ENCODE measurements at regions of chr17 and their contacts with region 1.

Region 1: GRCh38 chr17:50397111-50397918 is at the start of gene LRRC59:
- DNase-seq: peak; percentile 82
- H3K4me3 Mint-ChIP-seq: peak within 1 kb of the TSS; percentile 96
- H3K27ac Mint-ChIP-seq: peak within 1 kb of the TSS; percentile 90
- H3K4me1 Mint-ChIP-seq: peaks cover 20% of the 10 kb centered on the region
- H3K27me3 Mint-ChIP-seq: no peaks in the 10 kb centered on the region
- CTCF ChIP-seq: peak; percentile 96
- total RNA-seq, gene LRRC59: 306 and 344 TPM in 2 replicates

Region 2: DNA sequence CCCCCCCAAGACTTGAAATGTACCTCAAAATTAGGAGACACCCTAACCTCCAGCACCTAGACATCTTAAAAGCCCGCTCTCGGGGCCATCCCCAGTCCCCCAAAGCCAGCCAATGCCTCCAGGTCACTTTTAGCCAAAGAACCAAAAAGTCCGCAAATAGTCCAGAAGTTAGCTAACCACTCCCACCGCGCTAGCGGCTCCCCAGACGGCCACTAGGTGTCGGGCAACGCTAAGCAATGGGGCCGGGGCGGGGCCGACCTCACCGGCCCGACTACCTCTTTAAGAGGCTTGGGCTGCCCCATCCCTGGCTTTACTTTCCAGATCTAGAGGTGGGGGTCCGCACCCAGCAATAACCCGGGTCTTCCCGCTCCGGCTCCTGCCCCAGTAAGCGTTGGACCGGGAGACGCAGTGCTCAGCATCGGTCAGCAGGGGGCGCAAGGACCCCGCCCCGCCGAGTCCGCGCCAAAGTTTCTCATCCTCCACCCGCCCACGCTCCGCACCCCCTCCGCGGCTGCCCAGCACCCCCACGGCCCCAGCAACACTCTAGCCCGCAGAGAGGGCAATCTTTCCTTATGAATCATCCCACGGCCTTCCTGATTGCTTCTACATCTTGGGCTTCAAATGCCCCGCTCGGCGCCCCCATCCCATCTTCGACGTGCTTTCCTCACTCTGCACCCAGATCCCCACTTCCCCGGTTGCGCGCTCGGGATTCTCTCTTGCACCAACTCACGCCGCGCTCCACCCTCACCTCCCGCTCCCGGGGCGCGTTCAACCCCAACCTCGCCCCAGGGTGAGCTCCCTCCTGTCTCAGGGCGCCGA is 196.6 kb before region 1 on chr17:
- CTCF ChIA-PET with region 1: interaction called, 3 read pairs
- POLR2A ChIA-PET with region 1: interaction called, 6 read pairs
- intact Hi-C with region 1: loop called (anchors 1 kb)
- DNase-seq: peak; percentile 90
- H3K4me3 Mint-ChIP-seq: peak overlapping the region; percentile 78
- H3K27ac Mint-ChIP-seq: peak overlapping the region; percentile 64
- H3K4me1 Mint-ChIP-seq: peaks cover 20% of the 10 kb centered on the region
- H3K27me3 Mint-ChIP-seq: peaks cover 9% of the 10 kb centered on the region
- CTCF ChIP-seq: peak; percentile 99

Region 3: DNA sequence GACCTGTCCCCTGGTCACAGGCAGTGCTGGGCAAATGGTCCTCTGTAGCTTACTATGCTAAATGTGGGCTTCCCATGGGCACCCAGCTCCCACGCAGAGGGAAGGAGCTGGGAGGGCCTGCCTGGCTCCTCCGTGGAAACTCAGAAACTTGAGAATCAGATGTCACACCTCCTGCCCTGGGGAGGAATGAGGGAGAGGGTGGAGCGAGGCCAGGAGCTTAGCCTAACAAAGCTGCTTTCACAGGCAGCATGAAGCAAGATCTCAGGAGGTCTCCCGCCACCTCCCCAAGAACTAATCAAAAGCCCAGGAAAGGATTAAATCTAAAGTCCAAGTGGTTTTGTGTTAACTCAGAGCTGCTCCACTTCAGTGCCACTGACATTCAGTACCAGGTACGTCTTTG is 85.0 kb before region 1 on chr17:
- CTCF ChIA-PET with region 1: no interaction called
- POLR2A ChIA-PET with region 1: no interaction called
- intact Hi-C with region 1: no loop called
- DNase-seq: no peak
- H3K4me3 Mint-ChIP-seq: no peak overlapping the region
- H3K27ac Mint-ChIP-seq: no peak overlapping the region
- H3K4me1 Mint-ChIP-seq: no peaks in the 10 kb centered on the region
- H3K27me3 Mint-ChIP-seq: peaks cover 12% of the 10 kb centered on the region
- CTCF ChIP-seq: no peak

Region 4: GRCh38 chr17:50361561-50362480 is 35.5 kb before region 1 on chr17:
- CTCF ChIA-PET with region 1: interaction called, 46 read pairs
- POLR2A ChIA-PET with region 1: interaction called, 23 read pairs
- intact Hi-C with region 1: no loop called
- DNase-seq: peak; percentile 74
- H3K4me3 Mint-ChIP-seq: no peak overlapping the region
- H3K27ac Mint-ChIP-seq: peak overlapping the region; percentile 67
- H3K4me1 Mint-ChIP-seq: peaks cover 7% of the 10 kb centered on the region
- H3K27me3 Mint-ChIP-seq: no peaks in the 10 kb centered on the region
- CTCF ChIP-seq: peak; percentile 62

Region 5: GRCh38 chr17:50380369-50381259 is 16.7 kb before region 1 on chr17:
- CTCF ChIA-PET with region 1: interaction called, 37 read pairs
- POLR2A ChIA-PET with region 1: interaction called, 54 read pairs
- intact Hi-C with region 1: no loop called
- DNase-seq: no peak
- H3K4me3 Mint-ChIP-seq: no peak overlapping the region
- H3K27ac Mint-ChIP-seq: no peak overlapping the region
- H3K4me1 Mint-ChIP-seq: peaks cover 5% of the 10 kb centered on the region
- H3K27me3 Mint-ChIP-seq: no peaks in the 10 kb centered on the region
- CTCF ChIP-seq: no peak

Region 6: DNA sequence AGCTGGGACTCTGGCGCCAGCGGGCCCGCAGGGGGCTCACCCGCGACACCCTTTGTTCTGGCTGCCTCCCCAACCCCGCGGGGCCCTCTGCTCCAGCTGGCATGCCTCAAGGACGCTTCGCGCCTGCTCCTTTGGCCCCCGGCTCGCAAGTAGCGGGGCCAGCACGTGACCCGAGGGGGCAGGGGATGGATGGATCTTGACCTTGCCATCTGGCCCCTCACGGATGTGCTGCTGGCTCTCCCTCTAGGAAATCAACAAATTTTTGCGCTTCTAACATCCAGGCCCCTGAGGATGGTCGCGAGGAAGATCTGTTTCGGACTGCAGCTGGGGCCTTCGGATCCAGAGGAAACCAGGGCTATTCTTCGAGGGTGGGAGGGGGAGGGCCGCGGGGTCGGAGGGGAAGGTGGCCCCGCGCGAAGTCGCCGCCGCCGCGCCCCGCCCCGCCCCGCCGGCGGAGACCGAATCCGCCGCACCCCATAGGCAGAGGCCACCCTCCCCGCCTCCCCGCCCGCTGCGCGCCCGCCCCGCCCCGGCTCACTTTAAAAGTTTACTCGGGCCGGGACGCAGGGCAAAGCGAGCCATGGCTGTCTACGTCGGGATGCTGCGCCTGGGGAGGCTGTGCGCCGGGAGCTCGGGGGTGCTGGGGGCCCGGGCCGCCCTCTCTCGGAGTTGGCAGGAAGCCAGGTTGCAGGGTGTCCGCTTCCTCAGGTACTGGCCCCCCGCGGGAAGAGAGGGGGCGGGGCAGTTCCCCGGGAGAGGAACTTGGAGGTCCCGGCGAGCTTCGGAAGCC is 28.6 kb after region 1 on chr17 and contains the start of gene ACSF2:
- CTCF ChIA-PET with region 1: interaction called, 37 read pairs
- POLR2A ChIA-PET with region 1: interaction called, 75 read pairs
- intact Hi-C with region 1: no loop called
- DNase-seq: peak; percentile 63
- H3K4me3 Mint-ChIP-seq: peak within 1 kb of the TSS; percentile 71
- H3K27ac Mint-ChIP-seq: peak within 1 kb of the TSS; percentile 93
- H3K4me1 Mint-ChIP-seq: peaks cover 16% of the 10 kb centered on the region
- H3K27me3 Mint-ChIP-seq: no peaks in the 10 kb centered on the region
- CTCF ChIP-seq: no peak
- total RNA-seq, gene ACSF2: 10.5 and 17.8 TPM in 2 replicates

Region 7: GRCh38 chr17:50452610-50453300 is 55.4 kb after region 1 on chr17:
- CTCF ChIA-PET with region 1: interaction called, 10 read pairs
- POLR2A ChIA-PET with region 1: interaction called, 10 read pairs
- intact Hi-C with region 1: no loop called
- DNase-seq: peak; percentile 76
- H3K4me3 Mint-ChIP-seq: peak overlapping the region; percentile 19
- H3K27ac Mint-ChIP-seq: peak overlapping the region; percentile 9
- H3K4me1 Mint-ChIP-seq: peaks cover 14% of the 10 kb centered on the region
- H3K27me3 Mint-ChIP-seq: no peaks in the 10 kb centered on the region
- CTCF ChIP-seq: no peak